GM12878 (cell line): ENCODE measurements at regions of chr9 and their contacts with region 1.

Region 1: GRCh38 chr9:21326526-21327139 is 8.6 kb downstream of the KLHL9 start:
- DNase-seq: peak; percentile 32
- ATAC-seq: peak; percentile 89
- H3K4me3 ChIP-seq: no peak overlapping the region
- H3K27ac ChIP-seq: no peak overlapping the region
- H3K4me1 ChIP-seq: peaks cover 2% of the 10 kb centered on the region
- H3K27me3 ChIP-seq: no peaks in the 10 kb centered on the region
- CTCF ChIP-seq: peak; percentile 46 to 79 (median 59); a peak in 5 of 6 replicates
- EP300 ChIP-seq: no peak
- POLR2A ChIP-seq: no peak
- RAD21 ChIP-seq: peak; percentile 95

Region 2: DNA sequence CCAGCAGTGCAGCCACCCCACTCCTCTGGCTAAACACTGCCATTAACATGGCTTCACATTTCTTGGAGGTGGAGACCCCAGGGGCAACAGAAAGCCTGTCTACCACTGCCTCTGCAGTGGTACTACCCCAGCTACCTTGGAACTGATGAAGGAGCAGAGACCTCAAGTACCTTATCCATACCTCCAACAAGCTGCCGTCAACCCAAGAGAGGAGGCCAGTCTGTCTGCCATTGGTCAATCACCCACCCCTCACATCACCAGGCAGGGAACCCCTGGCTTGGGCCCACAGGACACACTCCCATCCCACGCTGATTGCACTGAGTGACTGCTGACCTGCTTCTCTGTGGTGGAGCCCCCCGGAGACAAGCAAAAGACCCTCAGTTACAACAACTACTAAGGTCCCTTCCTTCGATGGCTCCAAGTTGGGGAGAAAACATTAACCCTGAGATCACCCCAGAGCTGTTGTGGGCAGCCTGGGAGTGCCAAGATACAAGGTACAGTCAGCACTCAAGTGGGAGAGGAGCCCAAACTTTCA is 92.4 kb before region 1 on chr9:
- CTCF ChIA-PET with region 1: interaction called, 18 read pairs
- POLR2A ChIA-PET with region 1: no interaction called
- RAD21 ChIA-PET with region 1: interaction called, 5 read pairs
- SMC1A ChIA-PET with region 1: interaction called, 6 read pairs
- in situ Hi-C with region 1: no loop called
- intact Hi-C with region 1: no loop called
- DNase-seq: no peak
- ATAC-seq: no peak
- H3K4me3 ChIP-seq: no peak overlapping the region
- H3K27ac ChIP-seq: no peak overlapping the region
- H3K4me1 ChIP-seq: no peaks in the 10 kb centered on the region
- H3K27me3 ChIP-seq: no peaks in the 10 kb centered on the region
- CTCF ChIP-seq: no peak
- EP300 ChIP-seq: no peak
- POLR2A ChIP-seq: no peak
- RAD21 ChIP-seq: no peak

Region 3: DNA sequence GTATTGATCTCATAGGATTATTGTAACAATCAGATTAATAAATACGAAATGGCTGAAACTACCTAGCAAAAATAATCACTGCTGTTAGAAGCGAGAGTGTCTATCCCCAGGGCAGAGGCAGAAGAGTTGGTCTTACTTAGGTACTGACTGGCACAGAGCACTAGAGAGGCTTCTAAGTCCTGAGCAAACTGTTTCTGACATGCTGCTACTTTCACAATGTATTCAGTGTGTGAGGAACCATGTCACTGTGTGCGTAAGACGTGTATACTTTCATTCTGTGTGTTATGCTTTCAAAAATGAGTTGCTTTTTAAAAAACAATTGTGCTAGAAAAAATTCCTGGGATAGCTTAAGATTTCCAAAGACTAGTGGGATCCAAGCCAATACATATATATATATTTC is 14.1 kb after region 1 on chr9:
- CTCF ChIA-PET with region 1: interaction called, 26 read pairs
- POLR2A ChIA-PET with region 1: interaction called, 3 read pairs
- RAD21 ChIA-PET with region 1: interaction called, 9 read pairs
- SMC1A ChIA-PET with region 1: interaction called, 15 read pairs
- in situ Hi-C with region 1: no loop called
- intact Hi-C with region 1: no loop called
- DNase-seq: no peak
- ATAC-seq: peak; percentile 63
- H3K4me3 ChIP-seq: no peak overlapping the region
- H3K27ac ChIP-seq: no peak overlapping the region
- H3K4me1 ChIP-seq: no peaks in the 10 kb centered on the region
- H3K27me3 ChIP-seq: no peaks in the 10 kb centered on the region
- CTCF ChIP-seq: no peak
- EP300 ChIP-seq: no peak
- POLR2A ChIP-seq: no peak
- RAD21 ChIP-seq: no peak

Region 4: DNA sequence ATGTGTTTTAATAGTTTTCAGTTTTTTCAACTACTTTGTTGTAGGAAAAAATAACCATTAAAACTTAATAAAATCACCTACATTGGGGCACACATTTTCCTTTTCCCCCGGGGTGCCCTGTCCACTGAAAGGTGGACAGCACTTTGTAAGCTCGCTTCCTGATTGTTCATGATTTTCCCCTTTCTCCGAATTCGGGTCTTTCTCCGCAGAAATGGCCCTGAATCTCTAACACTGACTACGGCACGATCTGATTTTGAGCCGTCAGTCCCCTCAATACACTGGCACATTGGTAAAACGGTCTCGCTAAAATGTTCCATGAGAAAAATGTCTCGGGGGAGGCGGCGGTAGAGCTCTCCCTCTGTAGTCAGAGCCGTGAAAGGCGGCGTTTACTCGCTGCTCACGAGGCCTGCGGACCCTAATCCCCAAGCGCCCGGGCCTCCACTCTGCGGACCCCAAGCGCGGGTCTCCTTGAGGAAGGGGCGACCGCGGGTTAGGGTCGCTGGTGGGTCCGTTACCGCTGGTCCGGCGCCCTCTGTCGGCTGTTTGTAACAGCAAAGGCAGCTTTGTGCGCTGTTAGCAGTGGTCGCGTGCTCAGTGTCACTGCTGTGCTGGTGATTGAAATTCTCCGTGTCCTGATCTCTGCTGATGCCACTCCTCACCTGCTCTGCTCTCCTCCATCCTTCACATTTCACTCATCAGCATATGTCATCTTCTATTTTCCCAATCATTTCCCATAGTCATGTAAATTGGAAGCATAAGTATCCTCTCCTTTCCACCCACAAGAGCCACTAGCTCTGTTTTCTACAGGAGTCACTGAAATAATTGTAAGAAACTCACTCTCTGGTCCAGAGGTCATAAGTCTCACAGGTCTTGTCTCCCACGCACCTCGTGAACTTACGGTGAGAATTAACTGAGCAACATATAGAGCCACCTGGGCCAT is 69.4 kb after region 1 on chr9:
- CTCF ChIA-PET with region 1: interaction called, 256 read pairs
- POLR2A ChIA-PET with region 1: interaction called, 7 read pairs
- RAD21 ChIA-PET with region 1: interaction called, 86 read pairs
- SMC1A ChIA-PET with region 1: interaction called, 205 read pairs
- in situ Hi-C with region 1: loop called (anchors 5 kb)
- intact Hi-C with region 1: loop called (anchors 1 kb)
- DNase-seq: no peak
- ATAC-seq: peak; percentile 82
- H3K4me3 ChIP-seq: peak overlapping the region; percentile 68
- H3K27ac ChIP-seq: no peak overlapping the region
- H3K4me1 ChIP-seq: peaks cover 3% of the 10 kb centered on the region; the same call in 1 of the 2 replicates
- H3K27me3 ChIP-seq: no peaks in the 10 kb centered on the region
- CTCF ChIP-seq: peak; percentile 71 to 88 (median 85)
- EP300 ChIP-seq: no peak
- POLR2A ChIP-seq: no peak
- RAD21 ChIP-seq: peak; percentile 57

Region 5: GRCh38 chr9:21413624-21414023 is 87.0 kb after region 1 on chr9:
- CTCF ChIA-PET with region 1: interaction called, 55 read pairs
- POLR2A ChIA-PET with region 1: no interaction called
- RAD21 ChIA-PET with region 1: interaction called, 24 read pairs
- SMC1A ChIA-PET with region 1: interaction called, 32 read pairs
- in situ Hi-C with region 1: no loop called
- intact Hi-C with region 1: loop called (anchors 1 kb)
- DNase-seq: no peak
- ATAC-seq: peak; percentile 96
- H3K4me3 ChIP-seq: no peak overlapping the region
- H3K27ac ChIP-seq: no peak overlapping the region
- H3K4me1 ChIP-seq: peaks cover 6% of the 10 kb centered on the region; the same call in 1 of the 2 replicates
- H3K27me3 ChIP-seq: no peaks in the 10 kb centered on the region; a peak in 1 of 4 replicates
- CTCF ChIP-seq: peak; percentile 50 to 70 (median 69); a peak in 5 of 6 replicates
- EP300 ChIP-seq: no peak
- POLR2A ChIP-seq: no peak
- RAD21 ChIP-seq: peak; percentile 55

Region 6: GRCh38 chr9:21443849-21444625 is 117.4 kb after region 1 on chr9:
- CTCF ChIA-PET with region 1: interaction called, 13 read pairs
- POLR2A ChIA-PET with region 1: no interaction called
- RAD21 ChIA-PET with region 1: interaction called, 7 read pairs
- SMC1A ChIA-PET with region 1: interaction called, 13 read pairs
- in situ Hi-C with region 1: no loop called
- intact Hi-C with region 1: no loop called
- DNase-seq: peak; percentile 69
- ATAC-seq: peak; percentile 92
- H3K4me3 ChIP-seq: no peak overlapping the region
- H3K27ac ChIP-seq: no peak overlapping the region
- H3K4me1 ChIP-seq: peaks cover 7% of the 10 kb centered on the region; the same call in 1 of the 2 replicates
- H3K27me3 ChIP-seq: no peaks in the 10 kb centered on the region; a peak in 1 of 4 replicates
- CTCF ChIP-seq: no peak
- EP300 ChIP-seq: no peak
- POLR2A ChIP-seq: no peak
- RAD21 ChIP-seq: no peak

Region 7: GRCh38 chr9:21465859-21466518 is 139.4 kb after region 1 on chr9:
- CTCF ChIA-PET with region 1: interaction called, 19 read pairs
- POLR2A ChIA-PET with region 1: no interaction called
- RAD21 ChIA-PET with region 1: interaction called, 4 read pairs
- SMC1A ChIA-PET with region 1: interaction called, 12 read pairs
- in situ Hi-C with region 1: no loop called
- intact Hi-C with region 1: no loop called
- DNase-seq: no peak
- ATAC-seq: peak; percentile 83
- H3K4me3 ChIP-seq: no peak overlapping the region
- H3K27ac ChIP-seq: no peak overlapping the region
- H3K4me1 ChIP-seq: no peaks in the 10 kb centered on the region
- H3K27me3 ChIP-seq: no peaks in the 10 kb centered on the region
- CTCF ChIP-seq: peak; percentile 60 to 68 (median 66); a peak in 5 of 6 replicates
- EP300 ChIP-seq: no peak
- POLR2A ChIP-seq: no peak
- RAD21 ChIP-seq: peak; percentile 81